ENCODE measurements at regions of chr1 and their contacts with region 1.

Region 1: GRCh38 chr1:100459358-100460114 is 78.4 kb upstream of the GPR88 start:
- DNase-seq: peak; percentile 88
- ATAC-seq: peak; percentile 83
- H3K4me3 Mint-ChIP-seq: no peak overlapping the region
- H3K27ac Mint-ChIP-seq: peak overlapping the region; percentile 67
- H3K4me1 Mint-ChIP-seq: peaks cover 35% of the 10 kb centered on the region
- H3K27me3 Mint-ChIP-seq: no peaks in the 10 kb centered on the region
- CTCF ChIP-seq: peak; percentile 83

Region 2: DNA sequence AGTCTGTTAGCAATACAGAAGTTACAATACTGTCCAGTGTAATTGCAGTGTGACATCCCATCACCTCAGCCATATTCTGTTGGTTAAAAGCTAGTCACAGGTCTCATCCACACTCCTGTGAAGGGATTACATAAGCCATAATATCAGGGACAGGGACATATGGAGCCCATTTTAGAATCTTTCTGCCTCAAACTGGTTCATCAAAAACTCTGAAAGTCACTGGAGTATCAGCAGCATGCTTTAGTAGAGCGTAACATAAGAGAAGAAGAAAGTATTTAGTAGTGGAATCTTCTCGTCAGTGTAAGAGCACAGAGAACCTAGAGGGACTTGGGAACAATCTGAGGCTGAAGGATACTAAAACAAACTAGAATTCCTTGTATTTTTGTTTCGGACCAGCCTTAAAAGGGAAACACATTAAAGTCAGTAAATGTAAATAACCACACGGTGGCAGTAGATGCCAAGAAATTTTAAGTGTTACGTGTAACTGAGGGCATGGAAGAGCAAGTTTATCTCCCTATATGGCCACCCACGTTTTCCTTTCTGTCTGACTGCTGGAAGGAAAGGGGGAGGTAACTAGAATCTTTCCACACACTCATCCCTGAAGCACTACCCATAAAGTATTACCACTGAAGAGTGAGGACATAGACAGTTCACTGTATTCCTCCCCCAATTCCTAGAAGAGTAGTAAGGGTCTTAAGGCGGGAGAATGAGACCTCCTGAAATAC is 651.0 kb before region 1 on chr1:
- CTCF ChIA-PET with region 1: interaction called, 4 read pairs
- POLR2A ChIA-PET with region 1: no interaction called
- intact Hi-C with region 1: loop called (anchors 5 kb)
- DNase-seq: peak; percentile 45
- ATAC-seq: peak; percentile 84
- H3K4me3 Mint-ChIP-seq: peak overlapping the region; percentile 5
- H3K27ac Mint-ChIP-seq: peak overlapping the region; percentile 58
- H3K4me1 Mint-ChIP-seq: peaks cover 18% of the 10 kb centered on the region
- H3K27me3 Mint-ChIP-seq: peaks cover 13% of the 10 kb centered on the region
- CTCF ChIP-seq: peak; percentile 77

Region 3: GRCh38 chr1:100198596-100198995 is 260.9 kb before region 1 on chr1:
- CTCF ChIA-PET with region 1: no interaction called
- POLR2A ChIA-PET with region 1: no interaction called
- intact Hi-C with region 1: no loop called
- DNase-seq: no peak
- ATAC-seq: no peak
- H3K4me3 Mint-ChIP-seq: no peak overlapping the region
- H3K27ac Mint-ChIP-seq: no peak overlapping the region
- H3K4me1 Mint-ChIP-seq: no peaks in the 10 kb centered on the region
- H3K27me3 Mint-ChIP-seq: no peaks in the 10 kb centered on the region
- CTCF ChIP-seq: no peak

Region 4: GRCh38 chr1:100316622-100317021 is 142.9 kb before region 1 on chr1:
- CTCF ChIA-PET with region 1: no interaction called
- POLR2A ChIA-PET with region 1: no interaction called
- intact Hi-C with region 1: no loop called
- DNase-seq: no peak
- ATAC-seq: no peak
- H3K4me3 Mint-ChIP-seq: no peak overlapping the region
- H3K27ac Mint-ChIP-seq: no peak overlapping the region
- H3K4me1 Mint-ChIP-seq: no peaks in the 10 kb centered on the region
- H3K27me3 Mint-ChIP-seq: no peaks in the 10 kb centered on the region
- CTCF ChIP-seq: no peak

Region 5: DNA sequence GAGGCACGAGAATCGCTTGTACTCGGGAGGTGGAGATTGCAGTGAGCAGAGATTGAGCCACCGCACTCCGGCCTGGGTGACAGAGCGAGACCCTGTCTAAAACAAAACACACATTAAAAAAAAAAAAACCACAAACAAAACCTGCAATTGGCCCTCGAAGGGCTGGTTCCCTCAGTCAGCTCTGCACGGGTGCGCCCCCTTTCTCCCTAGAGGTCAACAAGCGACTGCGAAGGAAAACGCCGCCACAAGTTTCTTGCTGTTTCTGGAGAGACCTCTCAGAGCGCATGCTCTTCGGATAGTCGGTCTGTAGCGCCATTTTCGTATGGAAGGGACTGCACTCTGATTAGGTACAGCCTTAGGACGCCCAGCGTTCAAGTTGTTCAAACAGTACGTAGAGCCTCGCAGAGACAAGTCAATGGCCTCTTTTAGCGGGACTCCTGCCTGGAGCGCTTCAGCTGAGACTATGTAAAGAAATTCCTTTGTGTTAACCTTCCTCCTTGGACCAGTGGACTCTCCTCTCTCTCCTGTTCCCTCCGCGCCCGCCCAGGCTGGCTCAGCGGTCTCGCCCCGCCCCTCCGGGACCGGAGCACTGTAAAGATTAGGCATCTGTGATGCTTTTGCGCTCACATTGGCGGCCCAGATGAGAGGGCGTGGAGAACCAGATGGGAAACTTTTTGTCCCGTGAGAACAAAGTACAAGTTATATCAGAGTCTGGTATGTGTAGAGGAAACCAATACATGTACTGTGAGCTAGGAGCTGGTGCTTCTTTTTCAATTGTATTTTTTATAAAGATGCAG is 108.2 kb before region 1 on chr1:
- CTCF ChIA-PET with region 1: interaction called, 77 read pairs
- POLR2A ChIA-PET with region 1: interaction called, 10 read pairs
- intact Hi-C with region 1: no loop called
- DNase-seq: peak; percentile 91
- ATAC-seq: peak; percentile 67
- H3K4me3 Mint-ChIP-seq: peak overlapping the region; percentile 97
- H3K27ac Mint-ChIP-seq: peak overlapping the region; percentile 98
- H3K4me1 Mint-ChIP-seq: peaks cover 28% of the 10 kb centered on the region
- H3K27me3 Mint-ChIP-seq: no peaks in the 10 kb centered on the region
- CTCF ChIP-seq: peak; percentile 1

Region 6: DNA sequence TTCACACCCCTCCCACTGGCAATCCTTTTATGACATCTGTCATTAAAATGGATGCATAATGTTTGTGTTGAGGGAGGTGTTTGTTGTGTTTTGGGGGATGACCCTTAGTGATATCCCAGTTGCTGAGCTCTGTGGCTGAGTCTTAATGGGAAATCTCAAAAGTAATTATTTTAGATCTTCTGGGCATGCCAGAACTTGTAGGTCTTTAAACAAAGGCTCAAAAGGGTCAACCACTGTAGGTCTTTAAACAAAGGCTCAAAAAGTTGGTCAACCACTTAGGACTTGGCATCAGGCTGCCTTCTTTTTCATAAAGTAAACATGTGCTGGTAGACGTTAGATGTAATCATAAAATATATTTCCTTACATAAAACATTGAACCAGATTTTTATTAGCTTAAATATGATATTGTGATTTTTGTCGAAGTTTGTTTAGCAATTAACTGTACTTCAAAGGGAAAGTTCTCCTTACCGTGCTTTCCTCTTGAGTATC is 29.2 kb before region 1 on chr1:
- CTCF ChIA-PET with region 1: interaction called, 10 read pairs
- POLR2A ChIA-PET with region 1: interaction called, 4 read pairs
- intact Hi-C with region 1: no loop called
- DNase-seq: no peak
- ATAC-seq: no peak
- H3K4me3 Mint-ChIP-seq: no peak overlapping the region
- H3K27ac Mint-ChIP-seq: no peak overlapping the region
- H3K4me1 Mint-ChIP-seq: peaks cover 58% of the 10 kb centered on the region
- H3K27me3 Mint-ChIP-seq: no peaks in the 10 kb centered on the region
- CTCF ChIP-seq: no peak

Region 7: DNA sequence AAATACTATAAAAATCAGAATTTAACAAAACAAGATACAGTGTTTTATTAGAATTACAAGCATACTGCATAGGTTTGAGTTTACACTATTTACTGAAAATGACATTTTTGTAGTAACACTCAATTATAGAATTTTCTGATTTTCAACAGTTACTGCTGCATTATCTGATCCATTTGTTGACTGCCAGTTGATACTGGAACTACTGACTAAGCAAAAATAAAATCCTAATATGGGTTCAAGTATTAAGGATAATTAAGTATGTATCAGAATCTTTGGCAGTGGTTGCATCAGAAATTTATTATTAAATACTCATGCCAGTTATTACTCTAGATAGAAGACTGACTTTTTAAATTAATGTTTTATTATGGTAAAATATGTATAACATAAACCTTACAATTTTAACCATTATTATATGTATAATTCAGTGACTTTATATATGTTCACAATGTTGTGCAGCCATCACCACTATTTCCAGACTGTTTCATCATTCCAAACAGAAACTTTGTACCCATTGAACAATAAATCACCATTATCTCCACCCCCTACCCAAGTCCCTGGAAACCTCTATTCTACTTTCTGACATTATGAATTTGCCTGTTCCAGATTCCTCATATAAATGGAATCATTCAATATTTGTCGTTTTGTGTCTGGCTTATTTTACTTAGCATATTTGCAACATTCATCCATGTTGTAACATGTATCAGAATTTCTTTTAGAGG is 20.2 kb after region 1 on chr1:
- CTCF ChIA-PET with region 1: interaction called, 11 read pairs
- POLR2A ChIA-PET with region 1: no interaction called
- intact Hi-C with region 1: no loop called
- DNase-seq: no peak
- ATAC-seq: no peak
- H3K4me3 Mint-ChIP-seq: no peak overlapping the region
- H3K27ac Mint-ChIP-seq: no peak overlapping the region
- H3K4me1 Mint-ChIP-seq: peaks cover 8% of the 10 kb centered on the region
- H3K27me3 Mint-ChIP-seq: no peaks in the 10 kb centered on the region
- CTCF ChIP-seq: no peak

Region 8: DNA sequence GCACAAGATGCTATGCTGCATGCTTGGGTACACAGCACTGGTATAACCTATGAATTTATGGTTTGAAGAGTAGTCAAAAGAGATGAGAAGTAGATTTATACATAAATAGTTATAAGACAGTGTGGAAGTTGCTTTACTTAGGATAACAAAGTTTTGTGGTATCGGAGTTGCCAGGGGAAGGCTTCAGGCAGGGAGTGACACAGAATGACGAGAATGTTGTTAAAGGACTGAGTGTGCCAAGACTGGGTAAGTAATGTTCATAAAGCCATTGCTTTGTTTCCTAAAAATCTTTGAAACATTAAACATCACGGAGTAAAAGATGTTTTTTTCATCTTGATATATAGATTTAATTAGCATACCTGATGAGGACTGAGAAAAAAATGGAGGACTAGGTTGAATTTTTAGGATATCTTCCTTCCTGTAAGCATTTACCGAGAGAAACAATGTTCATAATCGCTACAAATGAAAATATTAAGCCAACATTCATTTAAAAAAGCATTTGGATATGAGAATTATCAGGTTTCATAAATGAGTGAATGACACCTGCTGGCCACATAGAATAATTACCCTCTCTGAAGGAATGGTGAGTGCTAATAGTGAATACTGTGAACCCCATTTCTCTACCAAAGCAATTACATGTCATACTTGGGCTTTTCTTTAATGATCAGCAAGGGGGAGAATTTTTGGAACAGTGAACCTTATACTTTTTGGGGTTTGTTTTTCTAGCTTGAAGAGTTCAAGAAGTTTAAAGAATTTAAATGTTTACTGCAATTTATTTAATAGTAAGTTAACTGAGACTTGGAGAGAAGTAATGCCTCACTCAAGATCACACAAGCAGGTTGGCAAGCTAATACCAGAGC is 406.7 kb after region 1 on chr1:
- CTCF ChIA-PET with region 1: interaction called, 67 read pairs
- POLR2A ChIA-PET with region 1: no interaction called
- intact Hi-C with region 1: loop called (anchors 2 kb)
- DNase-seq: no peak
- ATAC-seq: no peak
- H3K4me3 Mint-ChIP-seq: no peak overlapping the region
- H3K27ac Mint-ChIP-seq: no peak overlapping the region
- H3K4me1 Mint-ChIP-seq: no peaks in the 10 kb centered on the region
- H3K27me3 Mint-ChIP-seq: no peaks in the 10 kb centered on the region
- CTCF ChIP-seq: peak; percentile 63

Measured in activated CD8-positive, alpha-beta T cell treated with anti-CD3 and anti-CD28 coated beads for 36 hours (primary cell).